ENCODE measurements at regions of chr3 and their contacts with region 1.

Region 1: DNA sequence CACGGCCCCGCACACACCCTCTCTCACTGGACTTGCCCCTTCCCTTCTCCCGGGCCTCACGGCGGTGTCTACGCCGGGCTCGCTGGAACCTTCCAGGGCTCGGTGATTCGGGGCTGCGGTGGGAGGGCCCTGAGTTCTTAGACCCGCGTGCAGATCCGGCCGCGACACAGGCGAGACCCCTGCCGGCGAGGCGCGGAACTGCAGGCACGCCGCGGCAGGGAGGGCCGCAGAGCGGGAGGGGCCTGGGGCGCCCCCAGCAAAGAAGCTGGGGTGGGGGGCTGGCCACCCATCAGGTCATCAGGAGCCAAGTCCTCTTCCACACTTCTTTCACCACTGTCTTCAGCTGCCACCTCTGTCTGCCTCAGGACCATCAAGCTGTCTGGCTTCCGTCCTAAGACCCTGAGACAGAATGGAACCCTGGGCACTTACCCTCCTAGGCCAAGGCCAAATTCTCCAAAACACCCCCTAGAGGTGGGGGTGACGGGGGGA is 164.5 kb downstream of the XXYLT1 start:
- DNase-seq: peak in 2 of 3 donors; percentile 71 to 75
- H3K4me3 ChIP-seq: peak overlapping the region in 3 of 7 experiments; percentile 9 to 58 (median 43)
- H3K27ac ChIP-seq: no peak overlapping the region
- H3K4me1 ChIP-seq: peaks cover 0 to 45% (median 33%) of the 10 kb centered on the region in 4 experiments
- H3K27me3 ChIP-seq: no peaks in the 10 kb centered on the region

Region 2: DNA sequence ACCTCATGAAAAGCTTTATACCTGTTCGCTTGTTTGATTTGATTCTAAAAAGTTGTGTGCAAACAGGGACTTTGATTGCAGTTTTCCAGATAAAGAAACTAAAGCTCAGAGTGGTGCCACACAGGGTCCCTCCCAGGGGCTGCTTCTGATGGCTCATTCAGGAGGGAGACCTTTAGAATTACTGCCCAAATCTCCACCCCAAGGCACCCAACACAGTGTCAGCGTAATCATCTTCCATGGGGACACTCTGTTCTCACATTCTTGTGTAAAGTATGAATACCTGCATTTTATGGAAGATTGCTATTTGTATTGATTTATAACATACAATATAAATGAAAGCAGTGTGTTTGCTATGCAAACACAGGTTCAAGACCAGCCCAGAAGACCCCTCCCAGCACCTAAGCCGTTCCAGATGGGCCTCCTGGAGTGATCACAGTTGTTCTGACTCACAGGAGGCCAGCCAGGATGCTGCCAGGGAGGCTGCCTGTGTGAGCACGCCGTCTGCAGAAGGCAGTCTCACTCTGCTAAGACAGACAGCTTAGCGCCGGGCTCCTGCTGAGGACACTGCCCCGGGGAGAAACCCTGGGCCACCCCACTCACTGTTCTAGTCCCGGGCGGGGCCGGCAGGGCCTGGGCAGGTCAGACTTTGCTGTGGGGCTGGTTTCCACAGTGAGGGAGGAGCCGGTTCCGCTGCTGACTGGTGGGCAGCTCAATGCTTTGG is 235.2 kb before region 1 on chr3:
- CTCF ChIA-PET with region 1: no interaction called
- POLR2A ChIA-PET with region 1: no interaction called
- DNase-seq: peak in 1 of 3 donors; percentile 13
- H3K4me3 ChIP-seq: no peak overlapping the region
- H3K27ac ChIP-seq: no peak overlapping the region
- H3K4me1 ChIP-seq: peaks cover 0 to 11% (median 1%) of the 10 kb centered on the region in 4 experiments
- H3K27me3 ChIP-seq: no peaks in the 10 kb centered on the region

Region 3: DNA sequence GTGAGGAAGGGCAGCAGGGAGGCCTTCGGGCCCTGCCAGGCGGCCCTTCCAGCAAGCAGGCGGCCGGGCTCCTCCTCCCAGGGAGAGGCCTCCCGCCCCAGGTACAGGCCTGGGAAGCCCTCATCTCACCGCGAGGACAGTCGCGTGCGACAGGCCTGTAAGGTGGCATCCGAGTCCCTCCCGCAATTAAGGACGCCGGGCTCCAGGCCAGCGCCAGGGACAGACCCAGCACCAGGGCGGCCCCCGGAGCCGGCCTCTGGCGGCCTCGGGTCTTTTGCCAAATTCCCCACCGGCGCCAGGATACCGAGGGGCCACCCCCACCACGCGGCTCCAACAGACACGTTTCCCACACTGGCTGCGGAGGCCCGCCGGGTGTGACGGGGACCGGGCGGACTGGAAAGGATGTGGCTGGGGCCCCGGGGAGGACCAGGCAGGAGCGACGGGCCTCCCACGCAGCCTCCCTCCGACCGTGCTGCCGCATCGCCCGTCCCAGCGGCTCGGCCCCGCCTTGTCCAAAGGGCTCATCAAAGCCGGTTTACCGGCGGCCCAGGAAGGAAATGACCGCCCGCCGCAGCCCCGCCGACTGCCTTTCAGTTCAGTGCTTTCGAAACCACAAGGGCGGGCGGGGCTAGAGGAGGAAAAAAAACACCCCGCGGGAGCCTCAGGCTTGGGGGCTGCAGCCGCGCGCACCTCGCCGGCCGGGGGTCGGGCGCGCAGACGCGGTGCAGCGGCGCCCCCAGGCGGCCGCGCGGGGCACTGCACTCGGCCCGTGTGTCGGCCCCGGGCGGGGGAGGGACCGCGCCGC is 153.2 kb after region 1 on chr3:
- CTCF ChIA-PET with region 1: interaction called, 11 read pairs
- POLR2A ChIA-PET with region 1: no interaction called
- DNase-seq: peak; percentile 96 to 99 (median 98)
- H3K4me3 ChIP-seq: peak overlapping the region in 4 of 7 experiments; percentile 69 to 88 (median 80)
- H3K27ac ChIP-seq: peak overlapping the region; percentile 53 to 84
- H3K4me1 ChIP-seq: peaks cover 4 to 65% (median 36%) of the 10 kb centered on the region in 4 experiments
- H3K27me3 ChIP-seq: no peaks in the 10 kb centered on the region

Region 4: DNA sequence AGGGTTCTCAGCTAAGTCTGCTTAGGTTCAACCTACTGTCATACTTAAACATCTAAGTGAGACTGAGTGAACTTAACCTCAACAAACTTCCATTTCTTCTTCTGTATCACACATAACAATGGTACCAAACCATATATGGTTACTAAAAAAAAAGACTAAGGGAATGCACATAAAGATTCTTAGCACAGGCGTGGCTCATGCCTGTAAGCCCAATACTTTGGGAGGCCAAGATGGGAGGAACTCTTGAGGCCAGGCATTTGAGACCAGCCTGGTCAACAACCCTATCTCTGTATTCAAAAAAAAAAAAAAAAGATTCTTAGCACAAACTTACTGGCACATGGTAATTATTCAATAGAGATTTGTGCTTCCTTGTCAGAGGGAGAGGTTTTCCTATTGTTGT is 278.5 kb after region 1 on chr3:
- CTCF ChIA-PET with region 1: no interaction called
- POLR2A ChIA-PET with region 1: no interaction called
- DNase-seq: no peak
- H3K4me3 ChIP-seq: no peak overlapping the region
- H3K27ac ChIP-seq: no peak overlapping the region
- H3K4me1 ChIP-seq: peaks cover 0 to 12% (median 6%) of the 10 kb centered on the region in 4 experiments
- H3K27me3 ChIP-seq: no peaks in the 10 kb centered on the region